Right ventricle myocardium inferior (tissue), 1 donor: ENCODE measurements at regions of chr7 and their contacts with region 1.

Region 1: DNA sequence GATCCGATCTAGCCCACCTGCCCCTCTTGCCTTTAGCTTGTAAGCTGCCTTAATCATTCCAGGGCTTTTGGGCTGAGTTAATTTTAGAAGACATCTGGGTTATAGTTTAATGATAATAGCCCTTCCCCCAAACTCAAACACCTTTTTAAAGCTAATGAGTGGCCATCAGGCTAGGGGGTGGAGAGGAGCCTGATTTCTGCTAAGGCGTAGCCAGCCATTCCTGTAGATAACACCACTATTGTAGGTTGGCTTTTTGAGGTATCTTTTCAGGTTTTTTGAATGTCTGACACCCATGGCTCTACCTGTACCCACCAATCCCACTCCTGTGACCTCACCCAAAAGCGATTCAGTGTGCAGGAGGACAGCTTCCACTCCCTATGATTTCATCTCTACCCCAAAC is 7.6 kb upstream of the SYPL1 start:
- DNase-seq: no peak
- ATAC-seq: no peak

Region 2: DNA sequence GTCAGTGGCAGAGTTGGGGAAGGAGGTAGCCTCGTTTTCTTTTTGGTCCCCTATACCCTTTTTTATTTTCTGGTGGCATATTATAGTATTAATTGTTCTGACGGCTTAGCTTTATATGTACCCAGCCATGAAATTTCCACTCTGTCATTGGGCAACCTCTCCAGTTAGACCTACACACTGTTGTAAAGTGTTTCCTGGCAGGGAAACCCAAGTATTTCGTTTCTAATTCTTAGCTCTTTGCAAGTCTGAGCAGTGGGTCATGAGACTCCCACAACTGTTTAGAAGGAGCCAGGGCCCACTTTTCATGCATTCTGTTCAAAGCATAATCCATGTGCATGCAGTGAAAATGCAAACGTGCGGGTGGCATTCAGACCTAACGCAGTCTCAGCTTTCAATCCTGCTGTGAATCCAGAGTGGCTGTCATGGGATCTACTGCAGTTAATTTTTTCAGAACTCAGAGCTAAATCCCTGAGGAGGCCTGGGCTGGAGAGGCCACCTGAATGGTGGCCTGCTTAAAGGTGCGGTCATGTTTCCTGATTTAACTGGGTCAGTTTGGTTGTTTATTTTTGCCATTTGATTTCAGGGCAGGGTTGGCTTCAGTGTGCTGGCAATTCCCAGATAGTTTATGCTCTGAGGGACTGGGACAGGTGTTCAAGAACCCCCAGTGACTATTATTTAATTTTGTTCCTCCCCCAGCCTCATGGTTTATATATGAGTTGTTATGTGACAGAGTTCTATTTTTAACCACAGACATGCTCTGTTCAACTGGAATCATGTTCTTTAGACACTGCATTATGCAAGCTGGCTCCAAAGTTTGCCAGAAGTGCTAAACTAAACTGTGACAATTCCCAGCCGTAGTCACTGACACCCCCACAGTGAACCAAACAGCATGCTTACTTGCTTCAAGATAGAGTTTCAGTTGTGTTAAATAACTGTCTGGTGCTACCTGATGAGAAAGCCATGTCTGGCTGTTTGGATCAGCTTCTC is 19.8 kb after region 1 on chr7:
- intact Hi-C with region 1: loop called (anchors 1 kb)
- DNase-seq: no peak
- ATAC-seq: peak; percentile 87